ENCODE measurements at regions of chr2 and their contacts with region 1.

Region 1: DNA sequence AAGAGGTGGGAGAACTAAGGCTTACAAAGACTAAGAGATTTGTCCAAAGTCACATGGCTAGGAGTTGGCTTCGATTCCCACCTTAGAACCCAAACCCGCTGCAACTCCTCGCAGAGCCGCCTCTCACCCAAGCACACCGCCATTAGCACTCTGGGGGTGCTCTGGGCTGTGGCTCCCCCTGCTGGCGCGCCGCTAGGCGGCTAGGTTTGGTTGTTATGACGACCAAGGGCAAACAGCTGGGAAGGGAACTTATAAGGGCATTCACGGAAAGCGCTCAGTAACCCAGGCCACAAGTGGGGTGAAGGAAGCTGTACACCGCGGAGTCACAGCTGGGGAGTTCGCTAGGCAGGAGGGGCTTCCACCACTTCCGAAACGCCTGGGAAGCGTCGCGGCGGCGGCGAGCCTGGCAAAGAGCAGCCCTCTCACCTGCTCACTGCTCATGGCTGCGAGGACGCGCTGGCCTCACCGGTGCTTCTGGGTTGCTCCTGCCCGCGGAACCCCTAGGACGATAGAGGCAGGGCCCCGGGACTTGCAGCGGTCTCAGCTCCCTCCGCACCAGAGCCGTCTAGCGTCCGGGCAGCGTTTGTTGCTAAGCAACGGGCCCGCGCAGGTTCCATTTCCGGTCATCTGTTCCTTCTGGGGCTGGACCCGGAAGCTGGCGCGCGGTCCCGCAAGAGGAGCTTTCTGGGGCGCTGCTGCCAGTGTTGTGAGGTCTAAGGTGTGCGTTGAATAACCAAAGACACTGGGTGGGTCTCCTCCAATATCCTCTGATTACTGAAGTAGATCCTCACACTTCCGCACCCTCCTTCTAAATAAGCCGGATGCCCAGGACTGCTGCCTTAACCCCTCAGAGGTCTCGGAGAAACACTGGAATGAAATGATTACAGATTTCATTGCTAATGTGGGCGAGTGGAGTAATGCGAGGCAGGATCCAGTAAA is at the start of gene DNAH7:
- DNase-seq: peak; percentile 92
- ATAC-seq: peak; percentile 93
- H3K4me3 Mint-ChIP-seq: peak within 1 kb of the TSS; percentile 89
- H3K27ac Mint-ChIP-seq: no peak within 1 kb of the TSS; the same call in 1 of the 2 replicates
- H3K4me1 Mint-ChIP-seq: peaks cover 13% of the 10 kb centered on the region
- H3K27me3 Mint-ChIP-seq: peaks cover 8% of the 10 kb centered on the region; the same call in 1 of the 2 replicates
- CTCF ChIP-seq: peak; percentile 78
- total RNA-seq, gene DNAH7: 0.04 to 0.23 TPM (median 0.14 TPM) in 3 replicates

Region 2: GRCh38 chr2:195662138-195662537 is 406.4 kb before region 1 on chr2:
- CTCF ChIA-PET with region 1: interaction called, 10 read pairs
- POLR2A ChIA-PET with region 1: no interaction called
- DNase-seq: no peak
- ATAC-seq: no peak
- H3K4me3 Mint-ChIP-seq: no peak overlapping the region
- H3K27ac Mint-ChIP-seq: no peak overlapping the region; the same call in 1 of the 2 replicates
- H3K4me1 Mint-ChIP-seq: peaks cover 51% of the 10 kb centered on the region
- H3K27me3 Mint-ChIP-seq: no peaks in the 10 kb centered on the region
- CTCF ChIP-seq: no peak

Region 3: GRCh38 chr2:196018037-196018436 is 50.5 kb before region 1 on chr2:
- CTCF ChIA-PET with region 1: no interaction called
- POLR2A ChIA-PET with region 1: no interaction called
- DNase-seq: no peak
- ATAC-seq: no peak
- H3K4me3 Mint-ChIP-seq: no peak overlapping the region
- H3K27ac Mint-ChIP-seq: no peak overlapping the region
- H3K4me1 Mint-ChIP-seq: no peaks in the 10 kb centered on the region
- H3K27me3 Mint-ChIP-seq: no peaks in the 10 kb centered on the region
- CTCF ChIP-seq: no peak

Region 4: DNA sequence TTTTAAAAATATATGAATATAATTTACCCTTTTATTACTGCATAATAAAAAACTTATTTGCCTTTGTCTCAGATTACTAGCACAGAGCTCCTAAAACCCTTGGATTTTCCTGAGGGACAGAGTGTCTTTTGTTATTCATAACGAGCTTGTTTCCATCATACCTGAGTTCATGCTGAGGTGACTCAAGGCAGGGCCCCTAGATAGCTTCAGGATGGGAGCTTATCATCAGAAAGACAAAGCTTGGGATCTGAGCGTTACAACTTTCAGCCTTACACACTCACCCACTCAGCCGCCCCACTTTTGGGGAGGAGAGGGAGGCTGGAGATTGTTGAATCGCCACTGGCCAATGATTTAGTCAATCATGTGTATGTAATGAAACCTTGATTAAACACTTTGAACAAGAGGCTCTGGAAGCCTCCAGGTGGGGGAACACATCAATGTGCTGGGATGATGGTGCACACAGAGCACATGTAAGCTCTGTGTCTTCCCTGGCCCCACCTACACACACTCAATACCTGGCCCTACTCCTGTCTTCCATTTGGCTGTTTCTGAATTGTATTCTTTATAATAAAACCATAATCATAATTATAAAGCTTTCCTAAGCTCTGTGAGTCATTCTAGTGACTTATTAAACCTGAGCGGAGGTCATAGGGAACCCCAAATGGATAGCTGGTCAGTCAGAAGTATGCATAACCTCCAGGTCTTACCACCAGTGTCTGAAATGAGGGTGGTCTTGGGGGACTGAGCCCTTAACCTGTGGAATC is 28.6 kb after region 1 on chr2:
- CTCF ChIA-PET with region 1: interaction called, 10 read pairs
- POLR2A ChIA-PET with region 1: no interaction called
- DNase-seq: no peak
- ATAC-seq: peak; percentile 90
- H3K4me3 Mint-ChIP-seq: no peak overlapping the region
- H3K27ac Mint-ChIP-seq: peak overlapping the region; percentile 86
- H3K4me1 Mint-ChIP-seq: peaks cover 56% of the 10 kb centered on the region
- H3K27me3 Mint-ChIP-seq: no peaks in the 10 kb centered on the region; the same call in 1 of the 2 replicates
- CTCF ChIP-seq: no peak

Region 5: DNA sequence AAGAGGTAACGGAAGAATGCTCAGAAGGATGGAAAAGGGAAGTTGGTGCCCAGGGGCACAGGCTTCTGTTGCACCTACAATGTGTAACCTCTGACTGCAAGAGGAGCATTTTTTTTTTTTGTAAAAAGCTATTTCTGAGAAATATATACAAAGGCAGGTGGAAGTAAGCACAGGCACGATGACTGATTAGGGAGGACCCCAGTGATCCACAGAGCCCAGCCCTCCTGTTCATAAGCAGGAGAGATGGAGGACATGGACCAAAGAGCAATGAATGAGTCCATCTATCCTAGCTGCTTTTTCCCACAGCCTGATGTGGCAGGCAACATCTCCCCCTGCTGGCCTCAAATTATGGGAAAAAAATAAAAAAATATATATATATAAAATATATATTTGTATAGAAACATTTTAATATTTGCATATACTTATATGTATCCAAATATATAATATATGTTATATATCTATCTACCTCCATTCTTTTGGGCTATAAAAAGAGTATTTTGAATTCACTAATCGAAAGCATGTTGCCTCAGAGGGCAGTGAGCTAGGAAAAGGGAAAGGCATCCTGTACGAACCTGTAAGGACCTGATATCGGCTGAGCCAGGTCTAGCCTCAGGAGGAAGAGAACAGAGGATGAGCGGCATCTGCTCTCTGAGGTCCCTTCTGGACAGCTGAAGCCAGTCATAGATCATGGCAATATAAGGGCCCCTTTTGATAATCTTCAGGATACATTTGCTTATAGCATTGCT is 268.8 kb after region 1 on chr2:
- CTCF ChIA-PET with region 1: interaction called, 14 read pairs
- POLR2A ChIA-PET with region 1: no interaction called
- DNase-seq: no peak
- ATAC-seq: peak; percentile 73
- H3K4me3 Mint-ChIP-seq: no peak overlapping the region
- H3K27ac Mint-ChIP-seq: no peak overlapping the region
- H3K4me1 Mint-ChIP-seq: no peaks in the 10 kb centered on the region; the same call in 1 of the 2 replicates
- H3K27me3 Mint-ChIP-seq: no peaks in the 10 kb centered on the region
- CTCF ChIP-seq: peak; percentile 34; the same call in 1 of the 2 replicates